OCI-LY7 (cell line): ENCODE measurements at regions of chr20 and their contacts with region 1.

Region 1: GRCh38 chr20:5100684-5101347 is 18.9 kb downstream of the PCNA start:
- DNase-seq: peak; percentile 70
- H3K4me3 ChIP-seq: no peak overlapping the region
- H3K27ac ChIP-seq: no peak overlapping the region
- H3K4me1 ChIP-seq: no peaks in the 10 kb centered on the region
- CTCF ChIP-seq: peak; percentile 91

Region 2: DNA sequence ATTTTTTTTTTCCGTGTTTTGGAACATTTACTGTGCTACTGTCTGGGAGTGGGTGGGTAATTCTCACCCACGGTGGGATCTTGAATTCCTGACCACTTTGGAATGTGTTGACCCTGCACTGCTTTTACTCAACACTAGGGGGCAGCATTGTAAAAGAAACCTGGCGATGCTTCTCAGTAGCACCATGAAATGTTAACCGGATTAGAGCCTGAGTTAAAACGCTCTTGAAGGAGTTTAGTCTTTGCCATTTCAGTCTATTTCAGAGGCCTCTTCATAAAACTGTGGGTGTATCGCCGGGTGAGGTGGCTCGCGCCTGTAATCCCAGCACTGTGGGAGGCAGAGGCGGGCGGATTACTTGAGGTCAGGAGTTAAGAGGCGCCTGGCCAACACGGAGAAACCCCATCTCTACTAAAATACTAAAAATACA is 493.5 kb before region 1 on chr20:
- CTCF ChIA-PET with region 1: no interaction called
- POLR2A ChIA-PET with region 1: no interaction called
- intact Hi-C with region 1: loop called (anchors 5 kb)
- DNase-seq: peak; percentile 74
- H3K4me3 ChIP-seq: no peak overlapping the region
- H3K27ac ChIP-seq: no peak overlapping the region
- H3K4me1 ChIP-seq: no peaks in the 10 kb centered on the region
- CTCF ChIP-seq: peak; percentile 98

Region 3: GRCh38 chr20:4740774-4741431 is 359.9 kb before region 1 on chr20:
- CTCF ChIA-PET with region 1: no interaction called
- POLR2A ChIA-PET with region 1: no interaction called
- intact Hi-C with region 1: loop called (anchors 5 kb)
- DNase-seq: peak; percentile 65
- H3K4me3 ChIP-seq: no peak overlapping the region
- H3K27ac ChIP-seq: no peak overlapping the region
- H3K4me1 ChIP-seq: no peaks in the 10 kb centered on the region
- CTCF ChIP-seq: peak; percentile 96

Region 4: DNA sequence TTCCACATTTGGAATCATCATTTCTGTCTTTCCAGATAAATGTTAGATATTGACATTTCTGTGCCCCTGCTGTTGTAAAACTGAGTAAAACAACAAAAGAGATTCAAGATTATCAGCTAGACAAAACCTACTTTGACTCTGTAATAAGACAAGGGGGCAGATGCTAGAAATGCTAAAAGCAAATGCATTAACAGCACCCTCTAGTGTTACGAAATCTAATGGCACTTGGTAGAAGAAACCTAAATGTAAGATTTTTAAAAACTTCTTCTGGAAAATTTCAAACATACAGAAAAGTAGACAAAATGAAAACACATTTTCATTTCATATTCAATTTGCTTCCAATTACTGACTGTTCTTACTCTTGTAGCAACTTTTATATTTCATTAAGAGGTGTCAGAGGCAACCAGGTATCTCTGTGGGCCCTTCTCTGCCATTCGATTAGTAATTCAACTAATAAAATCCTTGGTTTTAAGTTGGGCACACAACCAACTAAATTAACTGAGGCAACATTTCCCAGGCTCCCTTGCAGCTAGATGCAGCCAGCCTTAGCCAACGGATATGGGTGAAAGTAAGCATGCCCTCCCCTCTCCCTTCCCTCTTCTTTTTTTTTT is 144.5 kb before region 1 on chr20:
- CTCF ChIA-PET with region 1: no interaction called
- POLR2A ChIA-PET with region 1: interaction called, 3 read pairs
- intact Hi-C with region 1: loop called (anchors 2 kb)
- DNase-seq: peak; percentile 77
- H3K4me3 ChIP-seq: no peak overlapping the region
- H3K27ac ChIP-seq: no peak overlapping the region
- H3K4me1 ChIP-seq: peaks cover 4% of the 10 kb centered on the region
- CTCF ChIP-seq: peak; percentile 99

Region 5: DNA sequence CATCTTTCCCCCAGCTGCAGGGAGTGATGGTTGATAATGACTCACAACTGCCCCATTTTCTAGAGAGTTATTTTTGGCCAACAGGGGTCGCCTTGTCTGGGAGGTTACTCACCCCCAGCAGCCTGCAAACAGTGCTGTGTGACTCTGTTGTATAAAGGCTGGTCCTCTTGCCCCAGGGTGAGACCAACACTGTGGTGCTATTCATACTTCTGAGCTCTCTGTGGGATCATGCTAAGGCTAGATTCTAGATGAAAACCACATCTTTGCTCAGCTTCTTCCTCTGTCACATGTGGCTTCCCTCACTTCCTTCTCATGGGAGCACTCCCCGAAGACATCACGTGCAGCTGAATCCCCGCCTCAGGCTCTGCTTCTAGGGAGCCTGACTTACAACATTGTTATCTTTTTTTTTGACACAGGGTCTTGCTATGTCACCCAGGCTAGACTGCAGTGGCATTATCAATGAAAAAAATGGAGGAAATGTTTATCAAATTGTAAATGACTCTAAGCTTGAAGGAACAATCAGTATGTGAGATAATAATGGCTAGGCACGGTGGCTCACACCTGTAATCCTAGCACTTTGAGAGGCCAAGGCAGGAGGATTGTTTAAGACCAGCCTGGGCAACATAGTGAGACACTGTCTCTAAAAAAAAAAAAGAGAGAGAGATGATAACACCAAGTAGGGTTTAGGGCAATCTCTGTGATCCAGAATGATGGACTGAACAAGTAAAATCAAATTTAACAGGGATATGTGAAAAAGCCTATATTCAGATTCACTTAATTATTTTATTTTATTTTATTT is 43.8 kb before region 1 on chr20:
- CTCF ChIA-PET with region 1: no interaction called
- POLR2A ChIA-PET with region 1: interaction called, 4 read pairs
- intact Hi-C with region 1: loop called (anchors 2 kb)
- DNase-seq: peak; percentile 57
- H3K4me3 ChIP-seq: no peak overlapping the region
- H3K27ac ChIP-seq: no peak overlapping the region
- H3K4me1 ChIP-seq: peaks cover 7% of the 10 kb centered on the region
- CTCF ChIP-seq: peak; percentile 75